Dorsolateral prefrontal cortex (tissue), 120 donors: ENCODE measurements at regions of chr6 and their contacts with region 1.

Region 1: DNA sequence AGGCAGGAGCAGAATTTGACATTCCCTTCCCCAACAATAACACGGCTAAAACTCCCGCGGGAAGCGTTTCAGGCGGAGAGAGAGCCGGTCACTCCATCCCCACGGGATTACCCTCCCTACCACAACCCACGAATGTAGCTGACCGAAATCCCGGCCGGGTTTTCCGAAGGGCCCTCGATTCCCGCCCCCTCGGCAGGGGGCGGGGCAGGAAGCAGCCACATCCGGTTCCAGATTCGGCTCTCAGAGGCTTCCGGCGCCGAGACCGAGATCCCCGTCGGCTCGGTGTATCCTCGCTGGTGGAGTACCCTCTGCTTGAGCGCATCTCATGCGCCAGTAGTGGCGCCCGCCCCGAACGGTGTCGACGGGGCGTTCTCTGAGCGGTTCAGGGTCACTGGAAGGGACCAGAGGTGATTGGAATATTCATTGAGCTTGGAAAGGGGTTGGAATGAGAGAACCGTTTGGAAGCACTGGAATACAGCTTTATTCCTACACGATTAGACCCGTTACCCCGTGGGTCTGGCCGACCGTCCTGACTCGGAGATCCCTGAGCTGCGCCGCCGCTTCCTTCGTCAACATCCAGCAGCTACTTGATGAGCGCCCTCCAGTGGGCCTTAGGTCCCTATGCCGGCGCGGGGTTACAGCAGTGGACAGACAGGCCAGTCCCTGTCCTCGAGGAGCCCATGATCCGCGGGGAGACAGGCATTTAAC is 649 bp upstream of the RGL2 start:
- DNase-seq: peak; percentile 81 to 93 (median 91)
- H3K4me3 ChIP-seq: peak overlapping the region; percentile 57 to 100 (median 89)
- H3K27ac ChIP-seq: peak overlapping the region; percentile 83 to 99 (median 98)
- H3K27me3 ChIP-seq: no peaks in the 10 kb centered on the region
- CTCF ChIP-seq: peak; percentile 33 to 86 (median 66)

Region 2: GRCh38 chr6:33288921-33289748 is 10.3 kb before region 1 on chr6 and contains the starts of genes PFDN6 and WDR46:
- intact Hi-C with region 1: loop called (anchors 1 kb)
- DNase-seq: peak; percentile 63 to 92 (median 86)
- H3K4me3 ChIP-seq: peak within 1 kb of the TSS; percentile 66 to 99 (median 89)
- H3K27ac ChIP-seq: peak within 1 kb of the TSS; percentile 44 to 96 (median 90)
- H3K27me3 ChIP-seq: no peaks in the 10 kb centered on the region
- CTCF ChIP-seq: peak in 14 of 56 donors; percentile 7 to 53 (median 22)
- total RNA-seq, gene PFDN6: 29.1 to 82.4 (median 59.2) TPM
- total RNA-seq, gene WDR46: 14.7 to 53.7 (median 30.1) TPM

Region 3: GRCh38 chr6:33317669-33318425 is 18.5 kb after region 1 on chr6 and contains the start of gene ZBTB22:
- intact Hi-C with region 1: loop called (anchors 1 to 2 kb)
- DNase-seq: peak; percentile 91 to 99 (median 98)
- H3K4me3 ChIP-seq: peak within 1 kb of the TSS; percentile 38 to 80 (median 65)
- H3K27ac ChIP-seq: peak within 1 kb of the TSS; percentile 35 to 95 (median 87)
- H3K27me3 ChIP-seq: no peaks in the 10 kb centered on the region
- CTCF ChIP-seq: peak in 3 of 56 donors; percentile 7 to 19 (median 15)
- total RNA-seq, gene ZBTB22: 16.7 to 36.6 (median 25.5) TPM